ENCODE measurements at regions of chr19 and their contacts with region 1.

Region 1: GRCh38 chr19:9205501-9206113 is 13.8 kb downstream of the OR7D4 start:
- DNase-seq: peak; percentile 43 to 59 (median 52)
- H3K4me3 ChIP-seq: no peak overlapping the region
- H3K4me3 Mint-ChIP-seq: peak overlapping the region in 7 of 8 donors; percentile 6 to 62 (median 57)
- H3K27ac ChIP-seq: no peak overlapping the region
- H3K27ac Mint-ChIP-seq: no peak overlapping the region
- H3K4me1 ChIP-seq: peaks cover 4% of the 10 kb centered on the region
- H3K4me1 Mint-ChIP-seq: peaks cover 0 to 9% (median 3%) of the 10 kb centered on the region in 4 donors
- H3K27me3 ChIP-seq: no peaks in the 10 kb centered on the region
- H3K27me3 Mint-ChIP-seq: peaks cover 0 to 13% of the 10 kb centered on the region in 2 donors

Region 2: GRCh38 chr19:9075064-9075949 is 130.3 kb before region 1 on chr19:
- CTCF ChIA-PET with region 1: no interaction called
- POLR2A ChIA-PET with region 1: no interaction called
- intact Hi-C with region 1: no loop called
- DNase-seq: no peak
- H3K4me3 ChIP-seq: no peak overlapping the region
- H3K4me3 Mint-ChIP-seq: no peak overlapping the region
- H3K27ac ChIP-seq: no peak overlapping the region
- H3K27ac Mint-ChIP-seq: no peak overlapping the region
- H3K4me1 ChIP-seq: no peaks in the 10 kb centered on the region
- H3K4me1 Mint-ChIP-seq: peaks cover 0 to 5% (median 0%) of the 10 kb centered on the region in 4 donors
- H3K27me3 ChIP-seq: no peaks in the 10 kb centered on the region
- H3K27me3 Mint-ChIP-seq: peaks cover 0 to 2% of the 10 kb centered on the region in 2 donors

Region 3: DNA sequence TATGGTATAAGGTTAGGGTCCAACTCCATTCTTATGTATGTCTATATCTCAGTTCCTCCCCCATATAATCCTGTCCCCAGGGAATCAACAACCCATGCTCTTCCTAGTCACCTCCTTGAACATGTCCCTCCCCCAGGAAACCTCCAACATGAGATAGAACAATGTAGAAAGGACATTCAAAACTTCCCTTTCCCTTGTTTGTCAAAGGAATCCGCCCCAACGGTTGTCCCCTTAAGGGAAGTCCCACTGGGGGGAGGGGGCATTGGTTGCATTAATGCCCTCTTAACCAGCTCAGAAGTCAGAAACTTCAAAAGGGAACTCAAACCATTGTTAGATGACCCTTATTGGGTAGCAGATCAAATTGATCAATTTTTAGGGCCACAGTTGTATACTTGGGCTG is 422.2 kb after region 1 on chr19:
- CTCF ChIA-PET with region 1: no interaction called
- POLR2A ChIA-PET with region 1: no interaction called
- intact Hi-C with region 1: loop called (anchors 5 kb)
- DNase-seq: no peak
- H3K4me3 ChIP-seq: no peak overlapping the region
- H3K4me3 Mint-ChIP-seq: peak overlapping the region in 1 of 8 donors; percentile 14
- H3K27ac ChIP-seq: no peak overlapping the region
- H3K27ac Mint-ChIP-seq: no peak overlapping the region
- H3K4me1 ChIP-seq: no peaks in the 10 kb centered on the region
- H3K4me1 Mint-ChIP-seq: peaks cover 3 to 9% (median 5%) of the 10 kb centered on the region in 4 donors
- H3K27me3 ChIP-seq: no peaks in the 10 kb centered on the region
- H3K27me3 Mint-ChIP-seq: no peaks in the 10 kb centered on the region